Colonic mucosa (tissue), 4 donors: ENCODE measurements at regions of chr11 and their contacts with region 1.

Region 1: GRCh38 chr11:68459886-68460740 is 439 bp upstream of the PPP6R3 start:
- DNase-seq: peak; percentile 97
- H3K4me3 ChIP-seq: peak overlapping the region; percentile 85
- H3K27ac ChIP-seq: peak overlapping the region; percentile 95
- H3K4me1 ChIP-seq: peaks cover 11% of the 10 kb centered on the region
- H3K27me3 ChIP-seq: no peaks in the 10 kb centered on the region
- CTCF ChIP-seq: no peak

Region 2: GRCh38 chr11:68383976-68384501 is 76.1 kb before region 1 on chr11:
- intact Hi-C with region 1: no loop called
- DNase-seq: peak; percentile 79
- H3K4me3 ChIP-seq: no peak overlapping the region
- H3K27ac ChIP-seq: no peak overlapping the region
- H3K4me1 ChIP-seq: peaks cover 28% of the 10 kb centered on the region
- H3K27me3 ChIP-seq: no peaks in the 10 kb centered on the region
- CTCF ChIP-seq: peak; percentile 95

Region 3: DNA sequence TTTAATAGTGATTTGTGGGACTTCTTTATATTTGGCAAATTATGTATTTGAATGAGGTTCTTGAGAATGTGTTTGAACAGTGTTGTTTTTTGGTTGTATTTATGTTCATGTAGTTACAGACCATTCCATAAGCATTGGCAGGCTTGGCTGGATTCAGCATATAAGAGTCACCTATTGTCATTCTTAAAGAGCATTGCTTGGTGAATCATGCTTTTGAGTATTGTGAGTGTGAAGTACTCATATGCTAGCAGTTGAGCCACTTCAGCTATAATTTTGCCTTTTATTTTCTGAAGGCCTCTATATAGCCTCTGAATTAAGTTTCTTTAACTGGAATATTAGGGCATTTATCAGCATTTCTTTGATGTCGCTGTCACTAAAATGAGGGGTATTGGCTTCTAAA is 114.2 kb after region 1 on chr11:
- intact Hi-C with region 1: loop called (anchors 10 kb)
- DNase-seq: no peak
- H3K4me3 ChIP-seq: no peak overlapping the region
- H3K27ac ChIP-seq: no peak overlapping the region
- H3K4me1 ChIP-seq: no peaks in the 10 kb centered on the region
- H3K27me3 ChIP-seq: no peaks in the 10 kb centered on the region
- CTCF ChIP-seq: no peak